ENCODE measurements at regions of chr9 and their contacts with region 1.

Region 1: DNA sequence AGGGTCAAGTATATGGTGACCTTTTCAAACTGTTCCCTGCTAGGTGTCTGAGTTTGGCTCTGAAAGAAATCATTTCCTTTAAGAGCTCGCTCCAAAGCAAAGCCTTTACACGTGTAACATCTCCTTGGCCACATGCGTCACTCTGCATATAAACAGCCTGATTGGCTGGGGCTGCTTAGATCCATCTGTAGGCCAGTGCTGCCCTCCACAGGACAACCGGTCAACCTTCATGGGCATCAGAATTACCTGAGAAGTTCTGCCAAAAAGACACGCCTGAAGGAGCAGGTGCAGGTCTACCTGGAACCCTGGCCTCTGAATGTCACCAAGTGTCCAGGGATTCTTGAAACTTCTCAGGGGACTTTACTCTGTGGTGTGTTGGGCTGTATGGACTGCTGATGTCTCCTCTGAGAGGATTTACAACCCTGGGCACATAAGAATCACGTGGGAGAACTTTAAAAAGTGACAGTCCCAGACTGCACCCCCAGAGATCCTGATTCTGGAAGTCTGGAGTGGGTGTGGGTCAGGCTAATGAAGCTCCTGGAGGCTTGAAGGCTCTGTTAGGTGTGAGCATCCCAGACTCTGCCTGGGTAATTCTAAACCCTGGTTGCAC is 497.6 kb downstream of the GADD45G start:
- DNase-seq: peak; percentile 84
- H3K4me3 ChIP-seq: no peak overlapping the region; a peak in 1 of 4 replicates
- H3K27ac ChIP-seq: no peak overlapping the region
- H3K4me1 ChIP-seq: peaks cover 0 to 9% of the 10 kb centered on the region in 2 experiments; a peak in 1 of 4 replicates
- H3K27me3 ChIP-seq: no peaks in the 10 kb centered on the region
- CTCF ChIP-seq: peak; percentile 65
- EP300 ChIP-seq: no peak
- RAD21 ChIP-seq: peak; percentile 94

Region 2: DNA sequence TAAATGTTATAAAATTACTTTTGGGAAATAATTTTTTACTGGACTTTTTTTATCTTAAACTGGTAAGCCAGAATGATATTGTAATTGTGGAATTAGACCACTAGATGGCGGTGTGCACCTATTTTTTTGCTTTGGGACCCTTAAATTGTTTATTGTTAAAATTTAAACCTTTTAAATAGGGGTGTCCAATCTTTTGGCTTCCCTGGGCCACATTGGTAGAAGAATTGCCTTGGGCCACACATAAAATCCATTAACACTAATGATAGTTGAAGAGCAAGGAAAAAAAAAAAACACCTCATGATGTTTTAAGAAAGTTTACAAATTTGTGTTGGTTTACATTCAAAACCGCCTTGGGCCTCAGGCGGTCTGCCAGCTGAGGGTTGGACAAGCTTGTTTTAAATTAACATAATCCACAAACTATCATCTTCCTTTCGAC is 526.0 kb before region 1 on chr9:
- CTCF ChIA-PET with region 1: interaction called, 11 read pairs
- POLR2A ChIA-PET with region 1: no interaction called
- DNase-seq: peak; percentile 37
- H3K4me3 ChIP-seq: no peak overlapping the region; a peak in 1 of 4 replicates
- H3K27ac ChIP-seq: no peak overlapping the region
- H3K4me1 ChIP-seq: no peaks in the 10 kb centered on the region
- H3K27me3 ChIP-seq: peaks cover 13% of the 10 kb centered on the region; the same call in 1 of the 2 replicates
- CTCF ChIP-seq: peak; percentile 85
- EP300 ChIP-seq: no peak
- RAD21 ChIP-seq: peak; percentile 74

Region 3: GRCh38 chr9:90121762-90122161 is 19.4 kb after region 1 on chr9:
- CTCF ChIA-PET with region 1: interaction called, 10 read pairs
- POLR2A ChIA-PET with region 1: no interaction called
- DNase-seq: no peak
- H3K4me3 ChIP-seq: no peak overlapping the region
- H3K27ac ChIP-seq: no peak overlapping the region
- H3K4me1 ChIP-seq: peaks cover 0 to 7% of the 10 kb centered on the region in 2 experiments; a peak in 2 of 4 replicates
- H3K27me3 ChIP-seq: no peaks in the 10 kb centered on the region
- CTCF ChIP-seq: no peak
- EP300 ChIP-seq: no peak
- RAD21 ChIP-seq: no peak